Right lobe of liver (tissue), 6 donors: ENCODE measurements at regions of chr9 and their contacts with region 1.

Region 1: GRCh38 chr9:4662108-4662988 is at the start of gene PLPP6:
- DNase-seq: peak; percentile 92 to 94 (median 93)
- ATAC-seq: peak; percentile 66 to 92 (median 84)
- H3K4me3 ChIP-seq: peak within 1 kb of the TSS; percentile 65 to 93 (median 76)
- H3K27ac ChIP-seq: peak within 1 kb of the TSS; percentile 92 to 94 (median 92)
- H3K4me1 ChIP-seq: peaks cover 0 to 45% (median 14%) of the 10 kb centered on the region in 4 donors
- H3K27me3 ChIP-seq: no peaks in the 10 kb centered on the region
- CTCF ChIP-seq: peak; percentile 28 to 63 (median 62)
- POLR2A ChIP-seq: peak; percentile 94
- total RNA-seq, gene PLPP6: 7.8 to 12.4 (median 9.3) TPM

Region 2: GRCh38 chr9:4339357-4339756 is 323.0 kb before region 1 on chr9:
- intact Hi-C with region 1: no loop called
- DNase-seq: peak; percentile 76 to 82 (median 77)
- ATAC-seq: peak; percentile 78 to 86 (median 82)
- H3K4me3 ChIP-seq: no peak overlapping the region
- H3K27ac ChIP-seq: peak overlapping the region in 2 of 3 donors; percentile 52 to 62
- H3K4me1 ChIP-seq: peaks cover 0 to 15% (median 2%) of the 10 kb centered on the region in 4 donors
- H3K27me3 ChIP-seq: no peaks in the 10 kb centered on the region
- CTCF ChIP-seq: peak; percentile 92 to 95 (median 92)
- POLR2A ChIP-seq: no peak

Region 3: GRCh38 chr9:4700091-4700490 is 37.7 kb after region 1 on chr9:
- intact Hi-C with region 1: no loop called
- DNase-seq: peak; percentile 52 to 75 (median 62)
- ATAC-seq: peak; percentile 92 to 94 (median 93)
- H3K4me3 ChIP-seq: no peak overlapping the region
- H3K27ac ChIP-seq: peak overlapping the region in 1 of 3 donors; percentile 14
- H3K4me1 ChIP-seq: peaks cover 0 to 24% (median 4%) of the 10 kb centered on the region in 4 donors
- H3K27me3 ChIP-seq: no peaks in the 10 kb centered on the region
- CTCF ChIP-seq: no peak
- POLR2A ChIP-seq: no peak

Region 4: DNA sequence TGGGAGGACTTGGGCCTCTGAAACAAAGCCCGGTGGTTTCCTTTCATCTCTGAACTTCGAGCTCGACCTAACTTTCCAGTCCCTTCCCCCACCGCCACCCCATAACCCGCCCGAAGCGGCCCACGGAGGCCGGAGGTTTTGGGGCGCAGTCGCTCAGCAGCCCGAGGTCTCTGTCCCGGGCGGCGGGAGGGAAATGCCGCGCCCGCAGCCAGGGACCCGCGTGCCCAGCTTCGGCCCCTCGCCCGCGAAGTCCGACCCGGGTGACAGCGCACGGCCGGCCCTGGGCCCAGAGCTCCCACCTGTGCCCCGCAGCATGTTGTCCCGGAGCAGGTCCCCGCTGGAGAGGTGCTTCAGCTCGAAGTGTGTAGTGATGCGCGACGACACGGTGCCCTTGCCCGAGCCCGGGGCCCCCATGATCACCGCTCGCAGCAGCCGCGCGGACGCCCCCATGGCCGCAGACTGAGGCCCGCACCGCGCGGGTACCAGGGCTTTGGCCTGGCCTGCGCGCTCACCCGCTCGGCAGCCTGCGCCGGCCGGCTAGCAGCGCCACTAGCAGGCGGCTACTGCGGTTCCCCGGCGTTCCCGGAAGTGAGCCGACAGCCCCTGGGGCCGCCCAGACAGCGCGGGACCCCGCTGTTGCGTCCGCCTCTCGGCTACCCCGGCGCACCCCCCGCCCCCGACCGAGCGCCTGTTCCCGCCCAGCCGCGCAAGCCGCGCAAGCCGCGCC is 78.5 kb after region 1 on chr9 and contains the start of gene AK3:
- intact Hi-C with region 1: loop called in 1 of 2 experiments (anchors 10 kb)
- DNase-seq: peak; percentile 92 to 95 (median 93)
- ATAC-seq: peak; percentile 73 to 94 (median 86)
- H3K4me3 ChIP-seq: peak within 1 kb of the TSS; percentile 79 to 99 (median 81)
- H3K27ac ChIP-seq: peak within 1 kb of the TSS; percentile 92 to 99 (median 94)
- H3K4me1 ChIP-seq: peaks cover 0 to 15% (median 0%) of the 10 kb centered on the region in 4 donors
- H3K27me3 ChIP-seq: no peaks in the 10 kb centered on the region
- CTCF ChIP-seq: peak in 3 of 4 donors; percentile 25 to 36 (median 25)
- POLR2A ChIP-seq: peak; percentile 96
- total RNA-seq, gene AK3: 72.4 to 131 (median 99.5) TPM

Region 5: GRCh38 chr9:4855841-4856240 is 193.5 kb after region 1 on chr9:
- intact Hi-C with region 1: no loop called
- DNase-seq: no peak
- ATAC-seq: no peak
- H3K4me3 ChIP-seq: no peak overlapping the region
- H3K27ac ChIP-seq: no peak overlapping the region
- H3K4me1 ChIP-seq: peaks cover 0 to 13% (median 3%) of the 10 kb centered on the region in 4 donors
- H3K27me3 ChIP-seq: no peaks in the 10 kb centered on the region
- CTCF ChIP-seq: no peak
- POLR2A ChIP-seq: no peak